Calu3 (cell line): ENCODE measurements at regions of chr12 and their contacts with region 1.

Region 1: GRCh38 chr12:58540480-58541299 is 379.6 kb downstream of the LRIG3 start:
- DNase-seq: peak; percentile 83
- H3K4me3 Mint-ChIP-seq: no peak overlapping the region
- H3K27ac Mint-ChIP-seq: no peak overlapping the region
- H3K4me1 Mint-ChIP-seq: peaks cover 20% of the 10 kb centered on the region
- H3K27me3 Mint-ChIP-seq: no peaks in the 10 kb centered on the region
- CTCF ChIP-seq: peak; percentile 83

Region 2: GRCh38 chr12:57983146-57983857 is 557.4 kb before region 1 on chr12:
- CTCF ChIA-PET with region 1: interaction called, 4 read pairs
- intact Hi-C with region 1: loop called (anchors 5 kb)
- DNase-seq: peak; percentile 67
- H3K4me3 Mint-ChIP-seq: no peak overlapping the region
- H3K27ac Mint-ChIP-seq: no peak overlapping the region
- H3K4me1 Mint-ChIP-seq: peaks cover 14% of the 10 kb centered on the region
- H3K27me3 Mint-ChIP-seq: no peaks in the 10 kb centered on the region
- CTCF ChIP-seq: peak; percentile 63

Region 3: DNA sequence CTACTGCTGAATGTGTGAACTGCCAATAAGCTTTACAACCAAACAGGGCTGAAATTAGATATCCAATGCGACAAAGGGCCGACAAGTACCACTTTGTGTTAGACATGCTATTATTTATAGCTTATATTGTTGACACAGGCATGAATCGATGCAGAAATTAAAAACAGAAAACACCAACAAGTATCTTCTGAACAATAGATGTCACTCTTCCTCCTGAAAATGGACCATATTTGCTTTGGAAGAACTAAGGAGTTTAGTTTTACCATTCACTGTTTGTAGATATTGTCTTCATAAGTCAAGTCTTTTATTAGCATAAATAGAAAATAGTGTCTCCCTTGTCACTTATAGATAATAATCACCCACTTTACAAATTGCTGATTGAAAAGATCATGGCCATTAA is 293.2 kb after region 1 on chr12:
- CTCF ChIA-PET with region 1: no interaction called
- intact Hi-C with region 1: loop called (anchors 10 kb)
- DNase-seq: no peak
- H3K4me3 Mint-ChIP-seq: no peak overlapping the region
- H3K27ac Mint-ChIP-seq: no peak overlapping the region
- H3K4me1 Mint-ChIP-seq: no peaks in the 10 kb centered on the region
- H3K27me3 Mint-ChIP-seq: no peaks in the 10 kb centered on the region
- CTCF ChIP-seq: no peak

Region 4: DNA sequence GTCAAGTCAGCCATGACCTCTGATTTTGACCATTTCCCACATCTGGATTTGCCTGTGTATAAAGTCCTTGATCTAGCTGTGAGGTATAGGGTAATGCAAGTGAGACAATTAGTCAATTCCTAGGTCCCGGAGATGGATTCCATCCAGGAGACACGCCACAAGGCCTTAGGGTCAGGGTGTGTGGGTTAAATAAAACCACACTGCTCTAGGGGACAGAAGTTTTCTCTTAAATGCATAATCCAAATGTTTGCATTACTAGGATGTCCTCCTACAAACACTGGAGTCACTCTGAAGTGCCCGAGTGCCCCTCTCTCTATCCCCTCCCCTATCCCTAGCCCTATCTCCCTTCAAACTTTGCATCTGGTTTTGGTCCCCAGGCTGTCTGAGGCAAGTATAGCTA is 352.8 kb after region 1 on chr12:
- CTCF ChIA-PET with region 1: no interaction called
- intact Hi-C with region 1: loop called (anchors 10 kb)
- DNase-seq: no peak
- H3K4me3 Mint-ChIP-seq: peak overlapping the region; percentile 61
- H3K27ac Mint-ChIP-seq: no peak overlapping the region
- H3K4me1 Mint-ChIP-seq: peaks cover 75% of the 10 kb centered on the region
- H3K27me3 Mint-ChIP-seq: no peaks in the 10 kb centered on the region
- CTCF ChIP-seq: no peak

Region 5: DNA sequence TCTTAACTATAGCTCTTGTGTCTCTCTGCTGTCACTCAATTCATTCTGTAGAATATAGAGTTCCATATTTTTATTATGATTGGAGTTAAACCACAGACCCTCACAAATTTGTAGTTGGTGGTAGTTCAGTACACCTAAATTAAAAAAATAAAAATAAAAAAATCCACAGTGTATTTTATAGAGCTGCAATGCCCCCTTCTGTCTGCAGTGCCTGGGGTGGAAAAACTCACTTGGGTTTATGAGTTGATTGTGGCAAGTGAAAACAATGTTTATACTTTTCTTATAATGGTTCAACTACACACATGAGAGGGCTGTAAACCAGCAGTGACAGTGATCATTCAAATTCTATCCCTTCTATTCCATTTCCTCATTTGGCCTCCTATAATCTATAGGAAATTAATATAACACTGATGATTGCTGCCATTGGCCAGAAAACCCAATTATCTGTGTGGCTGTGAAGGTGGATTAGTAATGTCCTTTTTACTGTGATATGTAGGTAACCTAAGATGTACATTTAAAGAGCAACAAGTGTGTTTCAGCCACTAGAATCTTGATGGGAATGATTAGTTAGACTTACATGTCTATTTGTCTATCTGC is 546.5 kb after region 1 on chr12:
- CTCF ChIA-PET with region 1: interaction called, 19 read pairs
- intact Hi-C with region 1: loop called (anchors 1 kb)
- DNase-seq: no peak
- H3K4me3 Mint-ChIP-seq: no peak overlapping the region
- H3K27ac Mint-ChIP-seq: no peak overlapping the region
- H3K4me1 Mint-ChIP-seq: peaks cover 60% of the 10 kb centered on the region
- H3K27me3 Mint-ChIP-seq: no peaks in the 10 kb centered on the region
- CTCF ChIP-seq: peak; percentile 47

Region 6: GRCh38 chr12:59164991-59165718 is 624.5 kb after region 1 on chr12:
- CTCF ChIA-PET with region 1: interaction called, 9 read pairs
- intact Hi-C with region 1: loop called (anchors 1 kb)
- DNase-seq: peak; percentile 30
- H3K4me3 Mint-ChIP-seq: peak overlapping the region; percentile 22
- H3K27ac Mint-ChIP-seq: peak overlapping the region; percentile 54
- H3K4me1 Mint-ChIP-seq: peaks cover 40% of the 10 kb centered on the region
- H3K27me3 Mint-ChIP-seq: no peaks in the 10 kb centered on the region
- CTCF ChIP-seq: peak; percentile 60